SK-N-SH (cell line): ENCODE measurements at regions of chr2 and their contacts with region 1.

Region 1: DNA sequence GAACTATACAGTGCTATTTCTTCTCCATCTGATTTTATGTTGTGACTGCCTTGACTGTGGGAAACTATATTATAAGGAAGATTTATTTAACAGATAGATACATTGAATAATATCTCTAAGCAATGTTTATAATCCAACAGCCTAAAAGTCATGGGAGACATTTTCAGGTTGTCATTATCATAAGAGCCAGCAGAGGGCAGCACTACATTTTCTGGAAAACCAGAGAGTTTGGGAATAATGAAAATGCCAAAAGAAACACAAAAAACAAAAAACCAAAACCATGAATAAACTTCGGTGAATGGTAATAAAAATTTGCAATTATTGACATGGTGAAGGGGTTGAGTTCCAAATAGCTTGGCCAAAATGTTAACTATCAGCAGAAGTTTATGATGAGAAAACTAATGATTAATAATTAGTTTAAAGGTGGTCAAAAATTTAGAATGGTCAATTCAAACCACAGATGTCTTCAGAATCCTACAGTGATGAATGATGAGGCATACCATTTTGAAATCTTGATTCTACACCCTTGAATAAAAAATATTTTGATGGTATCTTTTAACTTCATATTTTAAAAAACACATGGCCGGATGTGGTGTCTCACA is 4.7 kb downstream of the EEF1B2 start:
- DNase-seq: peak; percentile 44
- H3K4me3 ChIP-seq: no peak overlapping the region; a peak in 1 of 4 replicates
- H3K27ac ChIP-seq: peak overlapping the region in 1 of 2 experiments; percentile 13; a peak in 1 of 4 replicates
- H3K4me1 ChIP-seq: peaks cover 0 to 8% of the 10 kb centered on the region in 2 experiments; a peak in 2 of 4 replicates
- H3K27me3 ChIP-seq: no peaks in the 10 kb centered on the region
- CTCF ChIP-seq: peak; percentile 91
- EP300 ChIP-seq: no peak
- RAD21 ChIP-seq: peak; percentile 79

Region 2: GRCh38 chr2:206260188-206261012 is 96.0 kb after region 1 on chr2:
- CTCF ChIA-PET with region 1: interaction called, 20 read pairs
- POLR2A ChIA-PET with region 1: interaction called, 3 read pairs
- DNase-seq: peak; percentile 48
- H3K4me3 ChIP-seq: no peak overlapping the region
- H3K27ac ChIP-seq: no peak overlapping the region
- H3K4me1 ChIP-seq: no peaks in the 10 kb centered on the region; a peak in 1 of 4 replicates
- H3K27me3 ChIP-seq: peaks cover 45% of the 10 kb centered on the region
- CTCF ChIP-seq: peak; percentile 58
- EP300 ChIP-seq: no peak
- RAD21 ChIP-seq: peak; percentile 58